ENCODE measurements at regions of chr12 and their contacts with region 1.

Region 1: GRCh38 chr12:121095544-121096198 is 37.0 kb upstream of the P2RX7 start:
- DNase-seq: peak; percentile 70 to 87
- ATAC-seq: peak; percentile 80 to 86 (median 80)
- H3K4me3 ChIP-seq: peak overlapping the region; percentile 23
- H3K4me3 Mint-ChIP-seq: peak overlapping the region; percentile 93
- H3K27ac ChIP-seq: no peak overlapping the region
- H3K27ac Mint-ChIP-seq: peak overlapping the region; percentile 70 to 87
- H3K4me1 ChIP-seq: peaks cover 37% of the 10 kb centered on the region
- H3K4me1 Mint-ChIP-seq: peaks cover 49 to 50% of the 10 kb centered on the region in 2 donors
- H3K27me3 ChIP-seq: no peaks in the 10 kb centered on the region
- H3K27me3 Mint-ChIP-seq: peaks cover 0 to 13% of the 10 kb centered on the region in 2 donors
- CTCF ChIP-seq: peak; percentile 85

Region 2: GRCh38 chr12:120879102-120879501 is 216.6 kb before region 1 on chr12:
- intact Hi-C with region 1: no loop called
- DNase-seq: no peak
- ATAC-seq: no peak
- H3K4me3 ChIP-seq: no peak overlapping the region
- H3K4me3 Mint-ChIP-seq: no peak overlapping the region
- H3K27ac ChIP-seq: no peak overlapping the region
- H3K27ac Mint-ChIP-seq: no peak overlapping the region
- H3K4me1 ChIP-seq: peaks cover 7% of the 10 kb centered on the region
- H3K4me1 Mint-ChIP-seq: peaks cover 41 to 45% of the 10 kb centered on the region in 2 donors
- H3K27me3 ChIP-seq: no peaks in the 10 kb centered on the region
- H3K27me3 Mint-ChIP-seq: no peaks in the 10 kb centered on the region
- CTCF ChIP-seq: no peak

Region 3: DNA sequence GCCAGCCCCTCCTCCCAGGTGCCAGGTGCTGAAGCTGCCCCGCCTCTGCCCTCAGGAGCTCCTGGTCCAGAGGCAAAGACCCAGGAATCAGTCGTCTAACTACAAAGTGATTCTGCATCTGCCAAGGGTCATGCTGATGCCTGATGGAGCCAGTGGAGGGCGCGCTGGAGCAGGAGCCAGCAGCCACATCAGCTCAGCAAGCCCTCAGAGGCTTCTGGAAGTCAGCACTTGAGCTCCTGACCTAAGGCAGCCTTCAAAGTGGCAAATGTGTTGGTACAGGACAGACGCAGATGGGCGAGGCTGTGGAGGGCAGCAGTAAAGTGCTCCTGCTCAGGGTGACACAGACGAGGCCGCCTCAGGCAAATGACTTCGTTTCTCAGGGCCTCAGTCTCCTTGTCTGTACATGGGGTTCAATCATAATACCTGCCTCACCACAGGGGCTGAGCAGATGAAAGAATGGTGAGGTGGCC is 90.3 kb before region 1 on chr12:
- intact Hi-C with region 1: loop called (anchors 5 kb)
- DNase-seq: peak; percentile 45 to 65
- ATAC-seq: peak; percentile 65 to 87 (median 74)
- H3K4me3 ChIP-seq: no peak overlapping the region
- H3K4me3 Mint-ChIP-seq: no peak overlapping the region
- H3K27ac ChIP-seq: no peak overlapping the region
- H3K27ac Mint-ChIP-seq: peak overlapping the region in 1 of 2 donors; percentile 63
- H3K4me1 ChIP-seq: peaks cover 5% of the 10 kb centered on the region
- H3K4me1 Mint-ChIP-seq: peaks cover 0 to 11% of the 10 kb centered on the region in 2 donors
- H3K27me3 ChIP-seq: no peaks in the 10 kb centered on the region
- H3K27me3 Mint-ChIP-seq: no peaks in the 10 kb centered on the region
- CTCF ChIP-seq: peak; percentile 48

Region 4: GRCh38 chr12:121015825-121016766 is 79.6 kb before region 1 on chr12 and contains the start of gene C12orf43:
- intact Hi-C with region 1: loop called (anchors 5 kb)
- DNase-seq: peak; percentile 87 to 96
- ATAC-seq: peak; percentile 97 to 99 (median 98)
- H3K4me3 ChIP-seq: peak within 1 kb of the TSS; percentile 56
- H3K4me3 Mint-ChIP-seq: peak within 1 kb of the TSS; percentile 100
- H3K27ac ChIP-seq: peak within 1 kb of the TSS; percentile 71
- H3K27ac Mint-ChIP-seq: peak within 1 kb of the TSS; percentile 94 to 99
- H3K4me1 ChIP-seq: peaks cover 9% of the 10 kb centered on the region
- H3K4me1 Mint-ChIP-seq: peaks cover 10 to 19% of the 10 kb centered on the region in 2 donors
- H3K27me3 ChIP-seq: no peaks in the 10 kb centered on the region
- H3K27me3 Mint-ChIP-seq: no peaks in the 10 kb centered on the region
- CTCF ChIP-seq: no peak
- total RNA-seq, gene C12orf43: 16.0 to 19.9 (median 18.0) TPM

Region 5: DNA sequence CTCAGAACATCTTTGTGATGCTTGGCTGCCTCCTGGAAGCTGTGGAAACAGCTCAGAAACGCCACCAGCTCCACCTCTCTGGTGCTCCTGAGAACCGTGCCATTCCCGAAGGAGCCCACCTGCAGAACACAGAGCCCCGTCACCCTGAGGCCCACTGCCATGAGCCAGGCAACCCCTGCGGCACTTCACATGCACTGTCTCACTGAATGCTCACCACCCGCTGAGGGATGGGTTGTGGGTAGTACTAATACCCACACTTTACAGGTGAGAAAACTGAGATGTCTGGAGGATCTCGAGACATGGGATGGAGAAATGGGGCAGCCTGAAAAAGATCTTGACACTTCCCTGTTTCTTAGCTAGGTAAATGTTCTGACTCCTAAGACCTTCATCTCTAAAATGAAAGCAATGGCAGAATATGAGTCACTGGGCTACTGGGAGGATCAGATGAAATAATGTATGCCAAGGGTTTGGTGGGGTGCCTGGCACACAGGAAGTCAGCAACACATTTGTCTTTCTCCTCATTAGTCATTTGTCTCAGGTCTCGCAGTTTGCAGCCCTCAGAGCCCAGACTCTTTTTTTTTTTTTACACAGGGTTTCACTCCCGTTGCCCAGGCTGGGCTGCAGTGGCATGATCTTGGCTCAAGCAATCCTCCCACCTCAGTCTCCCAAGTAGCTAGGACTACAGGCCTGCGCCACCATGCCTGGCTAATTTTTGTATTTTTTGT is 61.9 kb before region 1 on chr12:
- intact Hi-C with region 1: loop called (anchors 2 kb)
- DNase-seq: peak; percentile 56 to 87
- ATAC-seq: peak; percentile 74 to 89 (median 87)
- H3K4me3 ChIP-seq: no peak overlapping the region
- H3K4me3 Mint-ChIP-seq: peak overlapping the region; percentile 78
- H3K27ac ChIP-seq: peak overlapping the region; percentile 82
- H3K27ac Mint-ChIP-seq: peak overlapping the region; percentile 87 to 94
- H3K4me1 ChIP-seq: peaks cover 62% of the 10 kb centered on the region
- H3K4me1 Mint-ChIP-seq: peaks cover 50 to 51% of the 10 kb centered on the region in 2 donors
- H3K27me3 ChIP-seq: no peaks in the 10 kb centered on the region
- H3K27me3 Mint-ChIP-seq: no peaks in the 10 kb centered on the region
- CTCF ChIP-seq: no peak

Region 6: DNA sequence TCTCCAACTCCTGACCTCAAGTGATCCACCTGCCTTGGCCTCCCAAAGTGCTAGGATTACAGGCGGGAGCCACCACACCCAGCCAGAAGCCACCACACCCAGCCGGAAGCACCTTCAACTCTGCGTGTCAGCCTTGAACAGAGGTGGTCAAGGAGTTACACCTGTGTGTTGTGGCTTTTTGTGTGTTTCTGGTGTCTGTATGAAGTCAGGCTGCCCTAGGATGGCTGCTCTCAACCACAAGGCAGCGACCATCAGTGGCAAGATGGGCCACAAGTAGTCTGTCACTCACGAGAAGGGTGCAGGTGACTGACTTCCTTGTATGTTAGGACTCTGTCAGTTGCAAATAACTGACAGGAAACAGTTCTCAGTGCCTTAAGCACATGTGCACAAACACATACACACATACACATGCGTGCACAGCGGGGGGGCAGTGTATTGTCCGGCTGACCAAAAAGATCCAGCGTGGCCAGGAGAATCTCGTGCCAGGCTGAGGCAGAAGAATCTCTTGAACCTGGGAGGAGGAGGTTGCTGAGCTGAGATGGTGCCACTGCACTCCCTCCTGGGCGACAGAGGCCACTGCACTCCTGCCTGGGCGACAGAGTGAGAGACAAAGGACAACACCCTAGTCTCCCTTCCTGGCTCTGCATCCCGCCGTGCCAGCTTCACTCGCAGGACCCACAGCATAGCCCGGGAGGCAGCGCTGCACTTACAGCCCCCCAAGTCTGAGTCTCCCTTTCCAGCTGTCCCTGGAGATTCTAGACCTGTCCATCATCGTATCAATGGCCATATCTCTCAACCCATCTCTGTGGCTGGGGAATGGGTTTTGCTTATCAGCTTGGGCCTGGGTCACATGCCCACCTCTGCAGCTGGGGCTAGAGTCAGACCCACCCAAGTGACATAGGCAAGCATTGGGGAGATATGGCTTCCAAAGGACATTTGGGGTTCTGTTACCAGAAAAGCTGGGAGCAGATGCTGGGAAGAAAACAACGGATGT is 127.9 kb after region 1 on chr12:
- intact Hi-C with region 1: no loop called
- DNase-seq: peak in 1 of 2 donors; percentile 69
- ATAC-seq: peak; percentile 67 to 78 (median 74)
- H3K4me3 ChIP-seq: no peak overlapping the region
- H3K4me3 Mint-ChIP-seq: peak overlapping the region; percentile 49
- H3K27ac ChIP-seq: peak overlapping the region; percentile 61
- H3K27ac Mint-ChIP-seq: peak overlapping the region; percentile 54 to 65
- H3K4me1 ChIP-seq: peaks cover 36% of the 10 kb centered on the region
- H3K4me1 Mint-ChIP-seq: peaks cover 18 to 28% of the 10 kb centered on the region in 2 donors
- H3K27me3 ChIP-seq: no peaks in the 10 kb centered on the region
- H3K27me3 Mint-ChIP-seq: no peaks in the 10 kb centered on the region
- CTCF ChIP-seq: no peak